Mammary epithelial cell (primary cell): ENCODE measurements at regions of chr11 and their contacts with region 1.

Region 1: DNA sequence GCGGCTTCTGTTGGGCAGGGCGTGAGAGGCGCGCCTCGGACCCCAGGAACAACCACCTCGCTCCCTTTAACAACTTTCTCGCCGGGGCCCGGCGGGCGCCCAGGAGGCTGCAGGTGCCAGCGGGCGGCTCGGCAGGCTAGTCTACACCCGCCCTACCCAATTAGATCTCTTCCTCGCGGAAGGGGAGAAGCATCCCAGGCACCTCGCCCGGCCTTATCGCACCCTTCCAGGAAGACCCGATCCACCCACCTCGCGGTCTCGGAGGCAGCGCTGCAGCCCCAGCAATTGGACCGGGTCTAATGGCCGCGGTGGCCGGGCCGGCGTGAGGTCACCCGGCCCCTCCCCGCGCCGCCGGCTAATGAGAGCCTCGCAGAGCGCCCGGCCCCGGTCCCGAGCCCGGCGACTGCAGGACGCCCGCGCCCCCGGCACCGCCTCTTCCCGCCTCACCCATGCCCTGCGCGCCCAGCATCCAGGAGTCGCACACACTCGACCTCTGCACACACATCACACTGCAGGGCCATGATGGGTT is at the start of gene PLAAT3:
- DNase-seq: no peak
- H3K4me3 ChIP-seq: peak within 1 kb of the TSS; percentile 42 to 59 (median 46)
- H3K27ac ChIP-seq: no peak within 1 kb of the TSS
- H3K4me1 ChIP-seq: peaks cover 25% of the 10 kb centered on the region
- H3K27me3 ChIP-seq: no peaks in the 10 kb centered on the region
- CTCF ChIP-seq: no peak
- total RNA-seq, gene PLAAT3: 2.7 to 6.3 TPM

Region 2: GRCh38 chr11:63567044-63567840 is 47.0 kb before region 1 on chr11:
- CTCF ChIA-PET with region 1: no interaction called
- dilution Hi-C with region 1: no loop called
- in situ Hi-C with region 1: no loop called
- intact Hi-C with region 1: loop called (anchors 5 kb)
- DNase-seq: peak; percentile 95
- H3K4me3 ChIP-seq: peak overlapping the region in 1 of 3 experiments; percentile 37
- H3K27ac ChIP-seq: peak overlapping the region; percentile 100
- H3K4me1 ChIP-seq: peaks cover 43% of the 10 kb centered on the region
- H3K27me3 ChIP-seq: no peaks in the 10 kb centered on the region
- CTCF ChIP-seq: no peak

Region 3: DNA sequence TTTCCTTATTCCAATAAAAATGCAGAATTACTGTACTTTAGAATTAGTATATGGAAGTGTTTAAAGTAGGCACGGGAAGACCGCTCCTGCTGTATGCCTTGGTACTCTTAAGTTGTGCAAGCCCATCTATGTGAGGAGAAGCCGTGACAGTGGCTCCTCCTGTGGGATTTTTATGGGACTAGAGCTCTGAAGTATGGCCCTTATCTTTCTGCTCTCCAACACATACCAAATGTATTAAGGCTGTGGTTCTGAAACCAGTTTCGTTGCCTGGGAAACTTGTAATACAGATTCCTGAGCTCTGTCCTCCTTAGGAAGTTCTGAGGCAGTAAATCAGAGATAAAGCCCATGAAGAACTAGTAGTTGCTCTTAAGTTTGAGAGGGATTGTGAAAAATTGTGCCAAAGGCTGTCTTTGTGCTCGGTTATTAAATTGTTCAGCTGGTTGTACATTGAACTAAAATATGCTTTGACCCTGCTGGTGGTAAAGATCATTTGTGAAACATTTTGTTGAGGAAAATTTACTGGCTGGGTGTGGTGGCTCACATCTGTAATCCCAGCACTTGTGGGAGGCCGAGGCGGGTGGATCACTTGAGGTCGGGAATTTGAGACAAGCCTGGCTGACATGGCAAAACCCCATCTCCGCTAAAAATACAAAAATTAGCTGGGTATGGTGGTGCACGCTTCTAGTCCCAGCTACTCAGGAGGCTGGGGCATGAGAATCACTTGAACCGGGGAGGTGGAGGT is 96.4 kb after region 1 on chr11:
- CTCF ChIA-PET with region 1: no interaction called
- dilution Hi-C with region 1: no loop called
- in situ Hi-C with region 1: no loop called
- intact Hi-C with region 1: no loop called
- DNase-seq: no peak
- H3K4me3 ChIP-seq: no peak overlapping the region
- H3K27ac ChIP-seq: no peak overlapping the region
- H3K4me1 ChIP-seq: no peaks in the 10 kb centered on the region
- H3K27me3 ChIP-seq: no peaks in the 10 kb centered on the region
- CTCF ChIP-seq: no peak